ENCODE measurements at regions of chr4 and their contacts with region 1.

Region 1: GRCh38 chr4:5378002-5378401 is 326.7 kb downstream of the STK32B start:
- DNase-seq: peak; percentile 45
- ATAC-seq: no peak
- H3K4me3 ChIP-seq: no peak overlapping the region
- H3K27ac ChIP-seq: no peak overlapping the region
- H3K4me1 ChIP-seq: peaks cover 49% of the 10 kb centered on the region
- H3K27me3 ChIP-seq: no peaks in the 10 kb centered on the region
- CTCF ChIP-seq: peak; percentile 65

Region 2: GRCh38 chr4:5050520-5051277 is 327.3 kb before region 1 on chr4:
- CTCF ChIA-PET with region 1: no interaction called
- POLR2A ChIA-PET with region 1: no interaction called
- intact Hi-C with region 1: loop called (anchors 1 kb)
- DNase-seq: peak; percentile 75
- ATAC-seq: peak; percentile 90
- H3K4me3 ChIP-seq: peak overlapping the region; percentile 65
- H3K27ac ChIP-seq: no peak overlapping the region
- H3K4me1 ChIP-seq: peaks cover 5% of the 10 kb centered on the region; the same call in 1 of the 2 replicates
- H3K27me3 ChIP-seq: no peaks in the 10 kb centered on the region
- CTCF ChIP-seq: peak; percentile 72

Region 3: DNA sequence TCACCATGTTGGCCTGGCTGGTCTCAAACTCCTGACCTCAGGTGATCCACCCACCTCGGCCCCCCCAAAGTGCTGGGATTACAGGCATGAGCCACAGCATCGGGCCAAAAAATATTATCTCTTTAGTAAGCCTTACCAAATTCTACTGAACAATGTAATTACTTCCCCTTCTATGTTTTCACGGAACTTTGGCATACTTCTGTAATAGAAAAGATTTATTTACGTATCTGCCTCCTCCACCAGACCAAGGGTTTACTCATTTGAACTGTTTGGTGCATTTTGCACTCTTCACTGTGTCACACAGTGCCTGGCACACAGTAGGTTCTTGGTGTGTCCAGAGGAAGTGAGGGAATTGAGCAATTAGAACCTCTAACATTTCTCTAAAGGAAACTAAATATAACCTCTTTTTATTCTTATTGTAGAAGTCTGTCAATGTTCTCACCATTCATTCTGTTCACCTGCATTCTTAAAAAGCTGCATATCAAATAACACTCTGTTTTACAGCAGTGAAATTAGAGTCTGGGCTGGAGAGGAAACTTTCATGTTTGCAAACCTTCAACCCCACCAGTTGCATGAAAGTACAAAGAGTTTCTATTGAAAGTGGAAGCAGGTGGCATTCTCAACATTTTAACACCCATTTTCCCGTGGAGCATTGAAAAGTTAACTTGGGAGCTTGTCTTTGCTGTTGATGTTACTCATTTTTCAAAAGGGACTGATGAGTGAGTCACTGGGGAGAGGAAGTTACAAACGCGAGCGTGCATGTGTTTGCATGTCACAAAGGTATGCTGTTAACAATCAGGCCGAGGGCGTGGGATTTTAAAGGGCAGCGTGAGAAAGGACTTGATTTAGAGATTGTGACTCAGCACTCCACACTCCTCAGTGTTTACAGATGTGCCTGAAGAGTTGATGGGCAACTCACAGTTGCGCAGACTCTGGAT is 12.7 kb before region 1 on chr4:
- CTCF ChIA-PET with region 1: no interaction called
- POLR2A ChIA-PET with region 1: no interaction called
- intact Hi-C with region 1: loop called (anchors 1 kb)
- DNase-seq: peak; percentile 97
- ATAC-seq: peak; percentile 79
- H3K4me3 ChIP-seq: peak overlapping the region; percentile 7; the same call in 1 of the 2 replicates
- H3K27ac ChIP-seq: peak overlapping the region; percentile 100
- H3K4me1 ChIP-seq: peaks cover 38% of the 10 kb centered on the region
- H3K27me3 ChIP-seq: no peaks in the 10 kb centered on the region
- CTCF ChIP-seq: no peak

Region 4: DNA sequence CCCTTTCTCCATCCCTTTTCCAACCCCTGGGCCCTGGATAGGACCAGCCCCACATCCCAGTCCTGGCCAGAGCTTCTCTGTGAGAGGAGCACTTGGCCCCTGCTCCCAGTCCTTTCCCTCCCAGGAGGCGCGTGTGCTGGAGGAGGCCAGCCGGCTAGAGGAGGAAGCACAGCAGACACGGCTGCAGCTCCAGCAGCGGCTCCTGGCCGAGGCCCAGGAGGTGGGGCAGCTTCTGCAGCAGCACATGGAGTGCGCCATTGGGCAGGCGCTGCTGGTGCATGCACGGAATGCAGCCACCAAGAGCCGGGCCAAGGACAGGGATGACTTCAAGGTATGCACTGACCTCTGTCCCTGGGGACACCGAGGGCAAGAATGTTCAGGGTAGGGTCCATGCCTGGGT is 420.5 kb after region 1 on chr4:
- CTCF ChIA-PET with region 1: no interaction called
- POLR2A ChIA-PET with region 1: no interaction called
- intact Hi-C with region 1: loop called (anchors 10 kb)
- DNase-seq: no peak
- ATAC-seq: no peak
- H3K4me3 ChIP-seq: no peak overlapping the region
- H3K27ac ChIP-seq: no peak overlapping the region
- H3K4me1 ChIP-seq: no peaks in the 10 kb centered on the region
- H3K27me3 ChIP-seq: no peaks in the 10 kb centered on the region
- CTCF ChIP-seq: no peak